Activated T-helper 1 cell treated with anti-CD3 and anti-CD28 coated beads, Interleukin-12 subunit alpha, Interleukin-12 subunit beta, Interleukin-2, Interleukin-4 antibody, amounts not matched to agents 30 ng/mL and 10 ng/mL and 1 ng/mL, durations not matched to agents 14 hours and 24 hours and 36 hours (primary cell): ENCODE measurements at regions of chr1 and their contacts with region 1.

Region 1: DNA sequence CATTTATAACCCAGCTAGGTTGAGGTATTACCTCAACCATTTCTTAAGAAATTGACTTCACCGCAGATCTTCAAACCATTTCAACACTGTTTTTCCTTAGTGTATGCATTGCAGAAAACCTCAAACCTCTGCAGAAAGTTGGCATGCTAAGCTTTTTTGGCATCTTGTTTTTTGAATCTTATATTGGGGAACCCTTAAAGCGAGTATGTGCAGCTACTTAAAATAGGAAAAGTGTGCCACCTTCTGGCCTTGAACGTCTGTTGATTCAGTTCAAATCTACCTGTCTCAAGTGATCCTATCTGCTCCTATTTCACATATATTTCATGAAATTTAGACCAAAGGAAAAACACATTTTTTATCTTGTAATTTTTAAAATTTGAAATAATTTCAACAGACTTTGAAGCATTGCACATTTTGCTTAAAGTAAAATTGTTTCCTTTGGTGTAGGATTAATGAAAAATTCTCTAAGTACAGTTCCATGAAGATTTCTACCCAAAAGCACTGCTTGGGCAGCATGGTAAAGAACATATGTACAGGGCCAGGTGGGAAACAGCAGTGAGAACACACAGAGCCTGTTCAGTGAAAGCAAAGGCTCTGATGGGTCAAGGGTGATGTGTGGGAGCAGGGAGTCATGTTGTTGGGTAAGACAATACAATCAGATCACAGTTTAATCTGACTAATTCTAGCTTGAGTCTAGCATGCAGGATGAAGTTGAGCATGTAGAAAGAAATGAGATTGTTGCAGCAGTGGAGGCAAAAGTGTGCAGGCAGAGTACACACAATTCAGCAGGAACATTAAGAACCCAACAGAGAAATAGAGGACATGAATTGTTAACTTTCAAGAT is 17.2 kb downstream of the HENMT1 start:
- DNase-seq: peak; percentile 30
- H3K4me3 Mint-ChIP-seq: peak overlapping the region; percentile 31
- H3K27ac Mint-ChIP-seq: peak overlapping the region; percentile 68
- H3K4me1 Mint-ChIP-seq: peaks cover 71% of the 10 kb centered on the region
- H3K27me3 Mint-ChIP-seq: no peaks in the 10 kb centered on the region

Region 2: GRCh38 chr1:108199781-108200570 is 443.7 kb before region 1 on chr1 and contains the start of gene SLC25A24:
- intact Hi-C with region 1: loop called (anchors 5 kb)
- DNase-seq: peak; percentile 83
- H3K4me3 Mint-ChIP-seq: peak within 1 kb of the TSS; percentile 91
- H3K27ac Mint-ChIP-seq: peak within 1 kb of the TSS; percentile 78
- H3K4me1 Mint-ChIP-seq: peaks cover 38% of the 10 kb centered on the region
- H3K27me3 Mint-ChIP-seq: peaks cover 7% of the 10 kb centered on the region
- total RNA-seq, gene SLC25A24: 14.6 and 16.6 TPM in 2 replicates

Region 3: GRCh38 chr1:108512239-108512981 is 131.3 kb before region 1 on chr1:
- intact Hi-C with region 1: loop called (anchors 1 kb)
- DNase-seq: no peak
- H3K4me3 Mint-ChIP-seq: no peak overlapping the region
- H3K27ac Mint-ChIP-seq: no peak overlapping the region
- H3K4me1 Mint-ChIP-seq: no peaks in the 10 kb centered on the region
- H3K27me3 Mint-ChIP-seq: peaks cover 46% of the 10 kb centered on the region

Region 4: DNA sequence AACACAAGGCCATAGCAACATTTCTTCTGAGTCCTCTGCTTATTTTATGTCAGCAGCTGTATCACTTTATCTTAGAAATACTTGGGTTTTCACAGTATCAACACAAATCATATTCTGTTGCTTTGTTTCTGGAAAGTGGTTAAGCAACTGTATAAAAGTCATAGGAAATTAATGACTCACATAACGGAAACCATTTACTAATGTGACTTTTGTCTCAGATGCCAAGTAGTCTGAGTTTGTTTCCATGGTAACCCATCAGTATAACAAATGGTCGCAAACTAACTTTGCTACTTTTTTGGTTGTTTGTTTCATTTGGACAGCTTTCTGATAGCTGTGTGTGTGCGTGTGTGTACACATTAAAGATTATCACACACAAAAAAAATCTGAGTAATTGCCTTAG is 52.8 kb before region 1 on chr1:
- intact Hi-C with region 1: loop called (anchors 1 kb)
- DNase-seq: no peak
- H3K4me3 Mint-ChIP-seq: no peak overlapping the region
- H3K27ac Mint-ChIP-seq: peak overlapping the region; percentile 75
- H3K4me1 Mint-ChIP-seq: peaks cover 49% of the 10 kb centered on the region
- H3K27me3 Mint-ChIP-seq: peaks cover 2% of the 10 kb centered on the region

Region 5: DNA sequence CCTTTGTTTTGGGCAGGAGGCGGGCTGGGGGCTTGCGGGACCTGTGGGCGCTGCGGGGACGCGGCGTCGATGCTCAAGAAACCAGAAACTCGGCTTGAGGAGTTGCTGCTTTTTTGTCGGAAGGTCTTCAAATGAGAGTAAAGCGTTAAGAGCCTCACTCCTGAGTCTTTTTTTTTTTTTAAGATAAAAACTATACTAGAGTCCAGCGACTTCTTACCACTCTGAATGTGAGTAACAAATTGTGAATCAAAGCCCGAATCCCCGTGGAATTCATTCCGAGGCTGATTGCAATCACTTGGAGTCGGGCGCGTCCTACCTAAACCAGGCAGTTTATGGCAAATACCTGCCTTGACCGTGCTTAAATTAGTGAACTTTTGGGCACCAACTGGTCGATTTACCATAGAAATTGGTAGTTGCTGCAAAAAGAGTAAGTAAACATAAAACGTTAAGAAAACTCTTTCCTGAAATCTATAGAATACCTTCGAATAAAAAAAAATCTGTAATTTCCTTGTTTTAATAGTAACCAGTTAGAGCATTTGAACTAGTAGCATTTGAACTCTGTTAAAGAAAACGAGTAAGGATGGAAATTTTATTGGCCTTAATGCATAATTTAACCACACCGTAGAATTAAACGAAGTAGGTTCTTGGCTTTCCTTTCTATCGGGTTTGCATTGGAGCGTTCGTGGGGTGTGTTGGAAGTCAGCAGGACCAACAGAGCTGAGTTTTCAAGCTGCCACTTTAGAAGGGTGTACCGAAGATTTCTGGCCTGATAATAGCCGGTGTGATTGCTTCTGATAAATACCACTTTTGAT is 233.8 kb after region 1 on chr1:
- intact Hi-C with region 1: loop called (anchors 5 kb)
- DNase-seq: no peak
- H3K4me3 Mint-ChIP-seq: peak overlapping the region; percentile 89
- H3K27ac Mint-ChIP-seq: peak overlapping the region; percentile 48
- H3K4me1 Mint-ChIP-seq: peaks cover 45% of the 10 kb centered on the region
- H3K27me3 Mint-ChIP-seq: peaks cover 6% of the 10 kb centered on the region